Stomach (tissue), 19 donors: ENCODE measurements at regions of chr2 and their contacts with region 1.

Region 1: DNA sequence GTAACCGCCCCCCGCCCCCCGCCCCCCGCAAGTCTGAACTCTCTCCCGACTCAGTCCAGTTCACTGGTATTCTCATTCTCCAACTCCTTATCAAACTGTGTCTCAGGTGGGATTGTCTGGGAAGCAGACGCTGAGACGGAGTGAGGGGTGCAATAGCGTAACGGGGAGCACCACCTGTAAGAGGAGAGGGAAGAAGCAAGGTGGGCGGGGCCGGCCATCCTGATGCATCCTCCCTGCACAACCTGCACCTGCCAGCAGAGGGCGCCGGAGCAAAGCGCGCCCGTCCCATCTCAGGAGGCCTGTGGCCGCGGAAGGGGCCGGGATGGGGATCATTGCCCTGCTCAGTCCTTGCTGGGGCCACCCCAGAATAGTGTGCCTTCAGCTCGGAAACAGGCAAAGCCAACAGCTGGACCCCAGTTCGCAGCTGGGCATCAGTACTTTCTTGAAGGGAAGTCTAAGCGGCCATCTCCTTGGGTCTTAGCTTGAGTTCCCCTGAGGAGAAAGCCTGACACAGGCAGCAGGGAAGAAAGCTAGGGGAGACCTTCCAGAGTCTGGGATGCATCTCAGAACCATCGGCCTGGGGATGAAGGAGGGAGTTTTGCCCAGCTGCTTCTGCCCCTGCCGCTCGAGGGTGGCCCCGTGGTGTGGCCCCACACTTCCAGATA is 208.0 kb downstream of the TFCP2L1 start:
- DNase-seq: peak; percentile 81 to 84
- H3K4me3 ChIP-seq: no peak overlapping the region
- H3K27ac ChIP-seq: no peak overlapping the region
- H3K4me1 ChIP-seq: peaks cover 9 to 23% (median 15%) of the 10 kb centered on the region in 4 donors
- H3K27me3 ChIP-seq: peaks cover 0 to 65% (median 30%) of the 10 kb centered on the region in 3 donors
- CTCF ChIP-seq: peak in 5 of 7 experiments; percentile 48 to 91 (median 81)
- EP300 ChIP-seq: no peak
- POLR2A ChIP-seq: no peak

Region 2: DNA sequence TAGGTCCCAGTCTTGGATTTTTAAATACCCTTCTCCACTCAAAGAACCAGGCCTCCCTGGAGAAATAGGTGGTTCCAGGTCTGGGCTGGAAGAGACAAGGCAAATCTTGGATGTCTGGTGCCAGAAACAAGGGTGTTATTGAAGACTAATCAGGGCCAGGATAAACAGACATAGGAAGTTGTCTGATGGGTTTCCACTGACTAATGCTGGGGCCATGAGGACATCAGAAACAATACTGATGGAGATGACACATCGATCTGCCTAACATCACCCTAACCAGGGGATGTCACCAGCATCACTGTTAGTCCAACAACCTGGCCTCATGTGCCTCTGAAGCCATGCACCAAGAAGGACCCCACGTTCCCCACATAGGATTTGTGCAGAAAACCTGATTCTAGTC is 383.9 kb before region 1 on chr2:
- intact Hi-C with region 1: loop called (anchors 5 kb)
- DNase-seq: no peak
- H3K4me3 ChIP-seq: no peak overlapping the region
- H3K27ac ChIP-seq: no peak overlapping the region
- H3K4me1 ChIP-seq: peaks cover 0 to 10% (median 2%) of the 10 kb centered on the region in 4 donors
- H3K27me3 ChIP-seq: peaks cover 0 to 59% (median 22%) of the 10 kb centered on the region in 3 donors
- CTCF ChIP-seq: no peak
- EP300 ChIP-seq: no peak
- POLR2A ChIP-seq: no peak

Region 3: GRCh38 chr2:121019071-121019470 is 57.9 kb before region 1 on chr2:
- intact Hi-C with region 1: no loop called
- DNase-seq: peak in 1 of 2 donors; percentile 75
- H3K4me3 ChIP-seq: peak overlapping the region in 2 of 4 donors; percentile 19 to 21
- H3K27ac ChIP-seq: no peak overlapping the region
- H3K4me1 ChIP-seq: peaks cover 5 to 19% (median 8%) of the 10 kb centered on the region in 4 donors
- H3K27me3 ChIP-seq: no peaks in the 10 kb centered on the region
- CTCF ChIP-seq: no peak
- EP300 ChIP-seq: no peak
- POLR2A ChIP-seq: no peak

Region 4: DNA sequence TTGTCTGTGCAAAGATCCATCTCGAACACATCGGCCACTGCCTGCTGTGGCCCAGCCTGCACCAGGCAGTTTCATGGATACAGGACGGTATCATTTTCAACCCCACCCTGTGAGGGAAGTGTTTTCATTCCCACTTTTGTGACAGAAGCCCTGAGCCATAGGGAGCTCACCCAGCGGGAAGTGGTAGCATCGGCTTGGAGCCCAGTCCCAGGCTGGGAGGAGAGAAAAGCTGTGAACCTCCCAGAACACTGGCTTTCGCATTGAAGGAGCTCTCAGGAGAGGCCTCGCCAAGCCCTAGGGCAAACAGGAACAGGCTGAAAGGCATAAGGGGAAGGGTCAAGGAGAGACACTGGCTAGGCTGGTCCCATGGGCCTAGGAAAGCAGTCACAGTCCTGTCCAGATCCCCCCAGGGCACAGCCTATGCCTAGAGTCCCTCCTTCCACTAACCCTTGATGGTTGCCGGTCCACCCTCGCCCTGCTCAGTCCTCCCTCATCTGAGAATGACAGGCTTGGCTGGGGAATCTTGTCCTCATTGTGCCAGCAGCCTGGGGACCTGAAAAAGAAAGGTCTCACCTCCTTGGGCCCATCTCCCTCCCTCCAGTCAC is 42.0 kb after region 1 on chr2:
- intact Hi-C with region 1: no loop called
- DNase-seq: no peak
- H3K4me3 ChIP-seq: no peak overlapping the region
- H3K27ac ChIP-seq: no peak overlapping the region
- H3K4me1 ChIP-seq: no peaks in the 10 kb centered on the region
- H3K27me3 ChIP-seq: peaks cover 0 to 3% (median 3%) of the 10 kb centered on the region in 3 donors
- CTCF ChIP-seq: no peak
- EP300 ChIP-seq: no peak
- POLR2A ChIP-seq: no peak